IMR-90 (cell line): ENCODE measurements at regions of chr10 and their contacts with region 1.

Region 1: DNA sequence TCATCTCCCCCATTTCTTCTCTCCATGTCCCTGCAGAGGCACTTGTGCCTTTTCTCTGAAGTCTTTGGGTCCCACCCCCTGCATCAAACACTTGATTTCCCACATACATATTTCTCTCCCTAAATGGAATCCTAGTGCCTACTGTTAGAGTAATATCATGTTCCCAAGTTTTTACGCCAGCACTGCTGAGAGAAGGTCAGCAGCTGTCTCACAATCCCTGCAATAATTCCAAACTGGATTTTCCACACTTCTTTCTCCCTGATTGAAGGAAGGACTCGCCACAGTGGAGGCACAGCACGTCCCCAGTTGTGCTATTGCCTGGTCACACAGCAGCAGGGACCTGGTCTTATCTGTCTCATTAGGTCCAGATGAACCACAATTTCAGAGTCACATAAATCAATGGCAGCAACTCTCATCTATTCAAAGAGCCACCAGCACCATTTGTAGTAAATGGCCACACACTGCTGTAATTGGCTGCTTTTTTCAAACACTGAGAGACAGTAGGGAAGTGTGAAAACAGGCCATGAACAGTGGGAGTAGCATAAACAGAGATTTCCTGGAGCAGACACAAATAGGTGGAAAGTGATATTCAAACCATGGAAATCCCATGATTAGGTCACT is 605.5 kb downstream of the XPNPEP1 start:
- DNase-seq: no peak
- ATAC-seq: no peak
- H3K4me3 ChIP-seq: no peak overlapping the region
- H3K27ac ChIP-seq: no peak overlapping the region
- H3K4me1 ChIP-seq: no peaks in the 10 kb centered on the region
- H3K27me3 ChIP-seq: no peaks in the 10 kb centered on the region
- CTCF ChIP-seq: no peak
- POLR2A ChIP-seq: no peak
- RAD21 ChIP-seq: no peak

Region 2: GRCh38 chr10:108817584-108817983 is 500.3 kb before region 1 on chr10:
- CTCF ChIA-PET with region 1: no interaction called
- POLR2A ChIA-PET with region 1: no interaction called
- dilution Hi-C with region 1: no loop called
- in situ Hi-C with region 1: no loop called
- intact Hi-C with region 1: no loop called
- DNase-seq: no peak
- ATAC-seq: no peak
- H3K4me3 ChIP-seq: no peak overlapping the region
- H3K27ac ChIP-seq: no peak overlapping the region
- H3K4me1 ChIP-seq: no peaks in the 10 kb centered on the region
- H3K27me3 ChIP-seq: no peaks in the 10 kb centered on the region
- CTCF ChIP-seq: no peak
- POLR2A ChIP-seq: no peak
- RAD21 ChIP-seq: no peak

Region 3: GRCh38 chr10:109183366-109183765 is 134.5 kb before region 1 on chr10:
- CTCF ChIA-PET with region 1: no interaction called
- POLR2A ChIA-PET with region 1: no interaction called
- dilution Hi-C with region 1: no loop called
- in situ Hi-C with region 1: no loop called
- intact Hi-C with region 1: no loop called
- DNase-seq: peak; percentile 72
- ATAC-seq: no peak
- H3K4me3 ChIP-seq: no peak overlapping the region
- H3K27ac ChIP-seq: no peak overlapping the region
- H3K4me1 ChIP-seq: peaks cover 6% of the 10 kb centered on the region
- H3K27me3 ChIP-seq: no peaks in the 10 kb centered on the region
- CTCF ChIP-seq: no peak
- POLR2A ChIP-seq: no peak
- RAD21 ChIP-seq: no peak

Region 4: DNA sequence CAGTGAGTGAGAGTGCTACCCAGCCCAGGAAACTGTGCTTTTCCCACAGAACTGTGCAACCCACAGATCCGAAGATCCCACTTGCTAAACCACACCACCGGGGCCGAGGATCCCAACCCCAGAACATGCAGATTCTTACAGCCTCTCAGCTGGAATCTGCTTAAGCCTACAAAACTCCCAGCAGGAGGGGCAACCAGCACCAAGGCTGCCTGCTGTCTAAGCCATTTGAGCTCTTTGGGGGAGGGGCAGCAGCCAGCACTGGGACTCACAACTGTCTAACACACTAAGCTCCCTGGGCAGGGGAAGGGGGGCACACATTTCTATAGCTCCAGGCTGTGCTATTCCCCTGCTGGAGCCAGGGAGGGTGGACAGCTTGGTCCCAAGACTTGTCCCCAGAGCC is 75.6 kb after region 1 on chr10:
- CTCF ChIA-PET with region 1: no interaction called
- POLR2A ChIA-PET with region 1: interaction called, 10 read pairs
- dilution Hi-C with region 1: no loop called
- in situ Hi-C with region 1: no loop called
- intact Hi-C with region 1: no loop called
- DNase-seq: no peak
- ATAC-seq: no peak
- H3K4me3 ChIP-seq: no peak overlapping the region
- H3K27ac ChIP-seq: no peak overlapping the region
- H3K4me1 ChIP-seq: no peaks in the 10 kb centered on the region
- H3K27me3 ChIP-seq: peaks cover 3% of the 10 kb centered on the region
- CTCF ChIP-seq: no peak
- POLR2A ChIP-seq: no peak
- RAD21 ChIP-seq: no peak